Posterior vena cava (tissue), 2 donors: ENCODE measurements at regions of chr3 and their contacts with region 1.

Region 1: DNA sequence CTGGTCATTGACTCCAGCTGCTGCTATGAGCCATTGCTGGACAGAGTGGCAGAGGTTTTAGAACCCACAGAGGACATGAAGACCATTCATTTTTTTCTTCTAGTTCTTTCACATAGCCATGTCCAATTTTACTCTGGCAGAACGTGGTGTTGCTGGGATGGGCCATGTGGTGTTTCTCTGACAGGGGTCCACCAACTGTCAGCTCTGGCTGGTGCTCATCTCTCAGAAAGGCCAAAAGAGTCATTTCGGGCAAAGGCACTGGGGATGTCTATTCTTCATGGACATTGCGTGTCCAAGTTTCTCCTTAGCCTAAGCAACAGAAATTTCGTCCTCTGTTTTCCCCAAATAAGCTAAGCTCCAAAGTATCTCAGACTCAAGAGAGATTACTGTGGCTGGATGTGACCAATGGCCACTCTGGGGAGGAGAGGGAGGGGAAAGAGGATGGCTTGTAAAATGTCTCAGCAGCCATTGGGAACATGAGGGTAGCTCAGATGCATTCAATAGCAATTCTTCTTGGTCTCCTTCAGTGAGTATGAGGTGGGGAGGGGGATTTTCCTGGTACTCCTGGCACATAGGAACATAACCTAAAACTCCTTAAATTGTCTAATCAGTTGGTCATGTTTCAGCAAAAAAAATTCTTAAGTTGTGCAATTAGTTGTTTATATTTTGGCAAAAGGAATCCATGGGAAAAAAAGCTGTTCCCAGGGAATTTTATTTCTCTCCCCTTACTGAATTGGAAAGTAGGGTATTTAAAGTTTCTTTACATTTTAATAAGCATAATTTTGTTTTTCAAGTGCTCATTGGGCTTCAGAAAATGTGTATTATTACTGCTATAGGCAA is 131.6 kb upstream of the MITF start:
- DNase-seq: no peak

Region 2: DNA sequence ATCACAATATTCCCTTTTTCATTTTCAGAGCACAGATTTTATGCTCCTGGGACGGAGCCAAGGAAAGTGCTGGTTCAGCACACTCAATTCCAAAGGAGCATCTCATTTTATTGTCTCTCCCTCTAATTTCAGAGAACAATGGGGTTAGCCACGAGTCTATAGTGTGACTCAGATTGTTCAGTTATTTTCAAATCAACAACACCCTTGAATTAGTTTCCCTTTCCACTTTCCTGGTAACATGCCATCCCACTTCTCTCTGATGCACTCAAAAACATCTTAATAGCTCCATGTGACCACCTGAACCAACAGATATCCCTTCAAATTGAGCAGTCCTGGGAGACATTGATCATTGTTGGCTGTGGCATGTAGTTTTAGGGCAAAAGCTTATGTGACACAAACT is 1094.4 kb after region 1 on chr3:
- intact Hi-C with region 1: loop called in 1 of 2 experiments (anchors 5 kb)
- DNase-seq: no peak